ENCODE measurements at regions of chr11 and their contacts with region 1.

Region 1: GRCh38 chr11:33291004-33291777 is 34.0 kb downstream of the HIPK3 start:
- DNase-seq: no peak
- H3K4me3 ChIP-seq: no peak overlapping the region
- H3K27ac ChIP-seq: no peak overlapping the region
- H3K4me1 ChIP-seq: no peaks in the 10 kb centered on the region
- H3K27me3 ChIP-seq: no peaks in the 10 kb centered on the region
- CTCF ChIP-seq: no peak
- POLR2A ChIP-seq: no peak

Region 2: GRCh38 chr11:32775908-32776307 is 515.3 kb before region 1 on chr11:
- intact Hi-C with region 1: no loop called
- DNase-seq: no peak
- H3K4me3 ChIP-seq: no peak overlapping the region
- H3K27ac ChIP-seq: no peak overlapping the region
- H3K4me1 ChIP-seq: no peaks in the 10 kb centered on the region
- H3K27me3 ChIP-seq: no peaks in the 10 kb centered on the region
- CTCF ChIP-seq: no peak
- POLR2A ChIP-seq: no peak

Region 3: DNA sequence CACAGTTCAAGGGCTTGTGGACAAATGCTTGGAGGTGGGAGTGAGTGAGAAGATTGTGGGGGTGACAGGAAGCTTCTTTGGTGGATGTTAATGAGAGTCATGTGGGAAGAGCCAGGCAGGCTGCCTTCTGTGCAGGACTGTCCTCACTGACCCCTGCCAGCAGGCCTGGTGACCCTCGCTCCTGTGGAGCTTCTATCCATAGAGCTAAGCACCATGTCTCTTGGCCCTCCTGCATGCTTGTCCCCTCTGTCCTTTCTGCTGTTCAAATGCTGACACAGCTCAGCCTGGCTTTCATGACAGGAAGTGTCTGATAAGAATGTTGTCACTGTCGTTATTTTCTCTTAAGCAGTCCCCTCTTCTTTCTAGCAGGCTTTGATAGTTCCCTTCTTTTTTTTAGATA is 851.9 kb after region 1 on chr11:
- intact Hi-C with region 1: loop called (anchors 5 kb)
- DNase-seq: no peak
- H3K4me3 ChIP-seq: no peak overlapping the region
- H3K27ac ChIP-seq: no peak overlapping the region
- H3K4me1 ChIP-seq: no peaks in the 10 kb centered on the region
- H3K27me3 ChIP-seq: no peaks in the 10 kb centered on the region
- CTCF ChIP-seq: no peak
- POLR2A ChIP-seq: no peak

Measured in breast epithelium (tissue), 4 donors.